HEK293T (cell line): ENCODE measurements at regions of chr2 and their contacts with region 1.

Region 1: GRCh38 chr2:20051532-20052228 is at the start of gene LAPTM4A:
- DNase-seq: peak; percentile 95

Region 2: GRCh38 chr2:20015472-20016083 is 36.1 kb before region 1 on chr2:
- CTCF ChIA-PET with region 1: interaction called, 10 read pairs
- POLR2A ChIA-PET with region 1: interaction called, 3 read pairs
- DNase-seq: peak; percentile 51

Region 3: GRCh38 chr2:20062615-20063545 is 11.2 kb after region 1 on chr2:
- CTCF ChIA-PET with region 1: no interaction called
- POLR2A ChIA-PET with region 1: interaction called, 25 read pairs
- DNase-seq: no peak